ENCODE measurements at regions of chr5 and their contacts with region 1.

Region 1: GRCh38 chr5:142095651-142096330 is 12.8 kb upstream of the NDFIP1 start:
- DNase-seq: peak; percentile 63
- H3K4me3 Mint-ChIP-seq: peak overlapping the region; percentile 16
- H3K27ac Mint-ChIP-seq: peak overlapping the region; percentile 94
- H3K4me1 Mint-ChIP-seq: peaks cover 51% of the 10 kb centered on the region
- H3K27me3 Mint-ChIP-seq: no peaks in the 10 kb centered on the region

Region 2: DNA sequence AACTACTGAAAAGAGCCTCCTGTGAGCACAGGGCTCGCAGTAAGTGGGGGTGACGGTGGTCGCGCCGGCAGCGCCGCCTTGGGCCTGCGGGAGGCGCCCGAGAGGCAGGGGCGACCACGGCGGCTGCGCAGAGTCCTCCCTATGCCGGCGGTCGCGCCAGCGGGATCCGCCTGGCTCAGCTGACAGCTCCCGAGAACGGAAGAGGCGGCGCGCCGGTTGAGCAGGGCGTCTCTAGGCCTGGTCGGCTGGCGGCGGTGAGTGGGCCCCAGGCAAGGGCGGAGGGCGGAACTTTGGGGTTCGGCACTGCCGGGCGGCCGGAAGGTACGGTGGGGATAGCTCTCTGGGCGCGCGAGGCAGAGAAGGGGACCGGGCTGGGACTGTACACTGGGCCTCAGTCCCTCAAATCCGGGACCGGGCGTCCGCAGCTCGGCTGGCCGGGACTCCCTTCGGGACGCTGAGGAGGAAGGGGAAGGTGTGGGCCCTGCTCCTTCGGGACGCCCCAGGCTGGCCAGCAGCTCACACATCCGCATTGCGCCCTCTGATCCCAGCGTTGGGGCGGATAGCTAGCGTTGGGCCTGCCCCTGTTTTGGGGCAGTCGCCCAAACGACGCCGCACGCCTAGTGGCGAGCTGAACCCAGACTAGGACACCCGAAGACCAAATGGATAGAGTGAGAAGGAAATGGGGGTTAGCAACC is 126.7 kb before region 1 on chr5 and contains the start of gene RNF14:
- intact Hi-C with region 1: loop called (anchors 1 kb)
- DNase-seq: peak; percentile 95
- H3K4me3 Mint-ChIP-seq: peak within 1 kb of the TSS; percentile 92
- H3K27ac Mint-ChIP-seq: peak within 1 kb of the TSS; percentile 93
- H3K4me1 Mint-ChIP-seq: peaks cover 26% of the 10 kb centered on the region
- H3K27me3 Mint-ChIP-seq: no peaks in the 10 kb centered on the region
- total RNA-seq, gene RNF14: 26.4 and 28.7 TPM in 2 replicates

Region 3: GRCh38 chr5:142006363-142007236 is 89.2 kb before region 1 on chr5:
- intact Hi-C with region 1: loop called (anchors 1 kb)
- DNase-seq: peak; percentile 58
- H3K4me3 Mint-ChIP-seq: peak overlapping the region; percentile 80
- H3K27ac Mint-ChIP-seq: peak overlapping the region; percentile 94
- H3K4me1 Mint-ChIP-seq: peaks cover 72% of the 10 kb centered on the region
- H3K27me3 Mint-ChIP-seq: no peaks in the 10 kb centered on the region

Region 4: DNA sequence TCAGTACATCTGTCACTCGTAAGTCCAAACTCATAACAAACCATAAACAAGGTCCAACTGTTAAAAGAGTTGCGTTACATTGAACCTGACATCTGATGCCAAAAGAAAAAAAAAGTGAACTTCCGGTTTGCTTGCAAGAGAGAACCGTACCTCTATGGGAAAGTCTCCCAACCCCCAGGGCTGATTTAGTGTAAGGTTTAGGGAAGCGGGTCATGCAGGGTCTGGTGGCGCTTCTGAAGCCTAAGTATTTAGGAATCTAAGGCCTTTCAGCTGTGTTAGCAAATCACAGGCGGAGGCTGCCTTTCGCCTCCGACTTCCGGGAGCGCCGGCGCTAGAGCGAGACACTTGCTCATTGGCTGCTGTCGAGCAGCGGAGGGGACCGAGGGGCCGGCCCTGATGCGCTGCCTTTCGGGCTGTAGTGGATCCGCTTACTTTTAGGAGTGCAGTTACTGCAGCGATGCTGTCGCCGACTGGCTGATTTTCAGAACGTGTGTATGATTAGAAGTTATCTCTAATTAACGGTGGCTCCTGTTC is 71.0 kb before region 1 on chr5:
- intact Hi-C with region 1: loop called (anchors 2 kb)
- DNase-seq: peak; percentile 83
- H3K4me3 Mint-ChIP-seq: peak overlapping the region; percentile 89
- H3K27ac Mint-ChIP-seq: peak overlapping the region; percentile 100
- H3K4me1 Mint-ChIP-seq: peaks cover 23% of the 10 kb centered on the region
- H3K27me3 Mint-ChIP-seq: no peaks in the 10 kb centered on the region

Region 5: DNA sequence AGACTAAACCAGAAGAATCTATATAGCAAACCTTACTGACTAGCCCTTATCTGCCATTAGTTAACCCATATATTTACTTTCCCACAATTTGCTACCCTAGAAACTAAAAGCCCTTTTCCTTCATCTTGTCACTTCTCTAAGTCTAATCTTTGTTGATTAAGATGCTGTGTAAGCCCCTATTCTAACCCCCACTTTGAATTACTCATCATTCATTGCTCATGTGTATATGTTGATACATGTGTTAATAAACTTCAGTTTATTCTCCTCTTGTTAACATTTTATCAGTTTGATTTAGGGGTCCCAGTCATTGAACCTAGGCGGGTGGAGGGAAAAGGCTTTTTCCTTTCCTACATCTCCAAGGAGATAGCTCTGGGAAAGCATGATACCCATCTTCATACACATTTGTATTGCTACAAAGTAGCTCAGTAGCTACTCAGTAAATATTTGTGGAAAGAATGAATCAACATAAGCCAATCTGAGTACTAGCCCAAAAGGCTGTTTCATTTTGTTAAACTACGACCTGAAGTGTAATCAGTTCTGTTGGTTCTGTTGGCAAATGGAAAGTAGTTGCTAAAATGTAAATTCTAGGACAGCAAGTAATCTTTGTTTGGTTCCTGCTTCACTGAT is 22.3 kb before region 1 on chr5:
- intact Hi-C with region 1: loop called (anchors 1 kb)
- DNase-seq: no peak
- H3K4me3 Mint-ChIP-seq: no peak overlapping the region
- H3K27ac Mint-ChIP-seq: peak overlapping the region; percentile 95
- H3K4me1 Mint-ChIP-seq: peaks cover 43% of the 10 kb centered on the region
- H3K27me3 Mint-ChIP-seq: no peaks in the 10 kb centered on the region

Region 6: GRCh38 chr5:142082182-142082781 is 13.5 kb before region 1 on chr5:
- intact Hi-C with region 1: loop called (anchors 1 kb)
- DNase-seq: no peak
- H3K4me3 Mint-ChIP-seq: no peak overlapping the region
- H3K27ac Mint-ChIP-seq: peak overlapping the region; percentile 50
- H3K4me1 Mint-ChIP-seq: peaks cover 29% of the 10 kb centered on the region
- H3K27me3 Mint-ChIP-seq: peaks cover 2% of the 10 kb centered on the region

Region 7: GRCh38 chr5:142215915-142216681 is 120.3 kb after region 1 on chr5:
- intact Hi-C with region 1: no loop called
- DNase-seq: no peak
- H3K4me3 Mint-ChIP-seq: no peak overlapping the region
- H3K27ac Mint-ChIP-seq: no peak overlapping the region
- H3K4me1 Mint-ChIP-seq: peaks cover 6% of the 10 kb centered on the region
- H3K27me3 Mint-ChIP-seq: peaks cover 6% of the 10 kb centered on the region

Region 8: DNA sequence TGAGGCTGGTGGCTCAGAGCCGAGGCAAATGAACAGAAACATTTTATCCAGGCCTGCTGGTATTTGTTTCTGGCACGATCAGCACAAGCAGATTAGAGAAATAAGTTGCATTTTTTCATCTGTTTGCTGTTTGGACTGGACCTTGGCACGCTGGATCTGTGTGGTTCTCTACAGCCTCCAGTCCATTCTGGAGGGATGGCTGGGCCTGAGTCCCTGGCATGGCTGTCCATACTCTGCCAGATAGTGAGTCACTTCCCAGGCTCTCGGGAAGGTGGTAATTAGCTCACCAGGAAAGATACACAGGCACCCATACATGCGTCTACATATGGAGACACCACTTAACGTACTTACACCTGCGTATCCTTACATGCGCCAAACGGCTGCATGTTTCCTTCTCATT is 150.5 kb after region 1 on chr5:
- intact Hi-C with region 1: no loop called
- DNase-seq: no peak
- H3K4me3 Mint-ChIP-seq: no peak overlapping the region
- H3K27ac Mint-ChIP-seq: no peak overlapping the region
- H3K4me1 Mint-ChIP-seq: no peaks in the 10 kb centered on the region
- H3K27me3 Mint-ChIP-seq: no peaks in the 10 kb centered on the region

Measured in activated T-helper 1 cell treated with anti-CD3 and anti-CD28 coated beads, Interleukin-12 subunit alpha, Interleukin-12 subunit beta, Interleukin-2, Interleukin-4 antibody, amounts not matched to agents 30 ng/mL and 10 ng/mL and 1 ng/mL, durations not matched to agents 14 hours and 24 hours and 36 hours (primary cell).